ENCODE measurements at regions of chr1 and their contacts with region 1.

Region 1: GRCh38 chr1:23290836-23291565 is 53.1 kb downstream of the HNRNPR start:
- DNase-seq: no peak
- ATAC-seq: no peak
- H3K4me3 ChIP-seq: no peak overlapping the region
- H3K27ac ChIP-seq: no peak overlapping the region
- H3K4me1 ChIP-seq: peaks cover 0 to 11% (median 5%) of the 10 kb centered on the region in 12 donors
- H3K27me3 ChIP-seq: no peaks in the 10 kb centered on the region
- CTCF ChIP-seq: no peak
- POLR2A ChIP-seq: no peak

Region 2: GRCh38 chr1:23344111-23344986 is 53.3 kb after region 1 on chr1 and contains the start of gene HNRNPR:
- intact Hi-C with region 1: no loop called
- DNase-seq: peak; percentile 100
- ATAC-seq: peak; percentile 97 to 99 (median 99)
- H3K4me3 ChIP-seq: peak within 1 kb of the TSS; percentile 73 to 95 (median 89)
- H3K27ac ChIP-seq: peak within 1 kb of the TSS; percentile 84 to 99 (median 94)
- H3K4me1 ChIP-seq: peaks cover 0 to 49% (median 36%) of the 10 kb centered on the region in 12 donors
- H3K27me3 ChIP-seq: no peaks in the 10 kb centered on the region
- CTCF ChIP-seq: peak in 4 of 12 donors; percentile 18 to 39 (median 25)
- POLR2A ChIP-seq: peak in 1 of 2 donors; percentile 75
- total RNA-seq, gene HNRNPR: 38.0 to 83.5 (median 69.2) TPM

Region 3: GRCh38 chr1:23362218-23362713 is 71.3 kb after region 1 on chr1:
- intact Hi-C with region 1: no loop called
- DNase-seq: no peak
- ATAC-seq: no peak
- H3K4me3 ChIP-seq: no peak overlapping the region
- H3K27ac ChIP-seq: no peak overlapping the region
- H3K4me1 ChIP-seq: peaks cover 0 to 20% (median 8%) of the 10 kb centered on the region in 12 donors
- H3K27me3 ChIP-seq: no peaks in the 10 kb centered on the region
- CTCF ChIP-seq: no peak
- POLR2A ChIP-seq: no peak

Region 4: DNA sequence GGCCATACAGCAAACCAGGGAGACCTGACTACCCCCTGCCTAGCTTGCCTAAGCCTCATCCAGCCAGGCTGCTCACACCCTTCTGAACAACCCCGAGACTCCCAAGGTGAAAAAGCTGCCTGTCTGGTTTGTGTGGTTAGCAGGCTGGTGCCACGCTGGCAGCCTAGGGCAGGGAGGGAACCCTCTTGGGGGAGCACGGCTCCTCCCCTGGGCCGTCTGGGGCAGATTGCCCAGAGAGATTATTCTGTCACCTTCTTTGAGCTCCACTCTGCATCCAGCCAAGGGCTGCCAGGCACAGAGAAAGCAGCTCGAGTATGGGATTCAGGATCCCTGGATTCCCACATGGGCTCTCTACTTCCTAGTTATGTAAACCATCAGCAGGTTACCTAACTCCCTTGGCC is 161.0 kb after region 1 on chr1:
- intact Hi-C with region 1: no loop called
- DNase-seq: no peak
- ATAC-seq: peak; percentile 15 to 66 (median 42)
- H3K4me3 ChIP-seq: no peak overlapping the region
- H3K27ac ChIP-seq: peak overlapping the region in 1 of 12 donors; percentile 24
- H3K4me1 ChIP-seq: peaks cover 0 to 22% (median 7%) of the 10 kb centered on the region in 12 donors
- H3K27me3 ChIP-seq: no peaks in the 10 kb centered on the region
- CTCF ChIP-seq: no peak
- POLR2A ChIP-seq: no peak

Region 5: DNA sequence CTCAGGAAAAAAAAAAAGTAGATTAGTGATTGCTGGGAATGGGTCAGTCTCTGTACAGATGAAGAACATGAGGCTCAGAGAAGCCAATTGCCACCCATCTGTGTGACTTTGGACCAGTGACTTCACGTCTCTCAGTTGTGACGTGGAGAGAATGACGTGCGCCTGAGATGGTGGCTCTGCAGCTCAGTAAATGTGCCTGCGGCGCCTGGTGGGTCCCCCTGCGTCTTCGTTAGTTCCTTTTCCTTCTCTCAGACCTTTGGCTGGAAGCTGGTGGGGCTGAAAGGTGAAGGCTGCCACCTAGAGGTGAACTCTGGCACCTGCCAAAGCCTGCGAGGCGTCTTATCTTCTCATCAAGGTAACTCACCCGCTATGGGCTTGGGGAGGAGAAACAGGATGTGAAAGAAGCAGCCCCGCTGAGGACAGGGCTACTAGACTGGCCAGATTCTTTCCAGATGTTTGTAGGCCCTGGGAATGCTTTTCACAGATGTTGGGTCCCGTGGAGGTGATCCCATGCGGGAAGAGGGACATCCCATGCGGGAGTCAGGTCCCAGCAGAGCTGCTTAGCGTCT is 248.8 kb after region 1 on chr1:
- intact Hi-C with region 1: loop called in 1 of 10 experiments (anchors 10 kb)
- DNase-seq: peak; percentile 79 to 89 (median 82)
- ATAC-seq: peak; percentile 45 to 92 (median 90)
- H3K4me3 ChIP-seq: peak overlapping the region in 5 of 12 donors; percentile 2 to 29 (median 15)
- H3K27ac ChIP-seq: peak overlapping the region in 2 of 12 donors; percentile 3 to 21
- H3K4me1 ChIP-seq: peaks cover 0 to 13% (median 9%) of the 10 kb centered on the region in 12 donors
- H3K27me3 ChIP-seq: no peaks in the 10 kb centered on the region
- CTCF ChIP-seq: peak; percentile 89 to 96 (median 92)
- POLR2A ChIP-seq: no peak

Measured in heart left ventricle (tissue), 16 donors.